ENCODE measurements at regions of chr1 and their contacts with region 1.

Region 1: GRCh38 chr1:47313915-47314664 is at the start of gene STIL:
- DNase-seq: peak; percentile 99
- ATAC-seq: peak; percentile 98
- H3K4me3 Mint-ChIP-seq: peak within 1 kb of the TSS; percentile 95
- H3K27ac Mint-ChIP-seq: peak within 1 kb of the TSS; percentile 91
- H3K4me1 Mint-ChIP-seq: peaks cover 8% of the 10 kb centered on the region
- H3K27me3 Mint-ChIP-seq: no peaks in the 10 kb centered on the region
- CTCF ChIP-seq: no peak
- total RNA-seq, gene STIL: 22.8 to 24.5 TPM

Region 2: GRCh38 chr1:47333922-47334764 is 20.1 kb after region 1 on chr1:
- CTCF ChIA-PET with region 1: interaction called, 7 read pairs
- POLR2A ChIA-PET with region 1: interaction called, 42 read pairs
- intact Hi-C with region 1: loop called (anchors 1 kb)
- DNase-seq: peak; percentile 79
- ATAC-seq: peak; percentile 90
- H3K4me3 Mint-ChIP-seq: no peak overlapping the region
- H3K27ac Mint-ChIP-seq: peak overlapping the region; percentile 97
- H3K4me1 Mint-ChIP-seq: peaks cover 21% of the 10 kb centered on the region
- H3K27me3 Mint-ChIP-seq: no peaks in the 10 kb centered on the region
- CTCF ChIP-seq: no peak